HEK293 (cell line): ENCODE measurements at regions of chr18 and their contacts with region 1.

Region 1: GRCh38 chr18:58051765-58052460 is 7.9 kb downstream of the NEDD4L start:
- H3K4me3 ChIP-seq: no peak overlapping the region
- H3K27ac ChIP-seq: no peak overlapping the region
- H3K4me1 ChIP-seq: peaks cover 2% of the 10 kb centered on the region; the same call in 1 of the 2 replicates
- CTCF ChIP-seq: peak; percentile 28; the same call in 1 of the 2 replicates

Region 2: DNA sequence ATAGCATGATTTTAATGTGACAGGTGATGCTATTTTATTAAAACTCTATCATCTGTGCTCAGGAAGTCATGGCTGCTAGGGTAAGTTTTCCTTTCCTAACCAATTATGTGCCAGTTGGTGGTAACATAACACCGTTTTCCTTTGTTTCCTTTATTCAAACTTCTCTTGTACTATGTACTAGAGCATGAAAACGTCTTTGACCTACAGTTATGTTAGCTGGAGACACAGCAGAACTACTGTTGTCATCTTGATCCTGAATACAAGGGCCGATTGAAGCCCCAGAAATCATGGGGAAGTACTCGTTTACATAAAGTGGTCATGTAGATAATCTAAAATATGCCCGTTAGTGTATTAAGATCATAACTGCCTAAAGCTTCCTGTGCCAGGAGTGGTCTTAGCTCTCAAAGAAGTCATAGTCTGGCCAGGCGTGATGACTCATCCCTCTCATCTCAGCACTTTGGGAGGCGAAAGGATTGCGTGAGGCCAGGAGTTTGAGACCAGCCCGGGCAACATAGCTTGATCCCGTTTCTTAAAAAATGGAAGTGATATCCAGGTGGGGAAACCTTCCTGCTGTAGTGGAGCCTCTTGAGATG is 12.6 kb after region 1 on chr18:
- CTCF ChIA-PET with region 1: interaction called, 14 read pairs
- POLR2A ChIA-PET with region 1: interaction called, 3 read pairs
- H3K4me3 ChIP-seq: no peak overlapping the region
- H3K27ac ChIP-seq: no peak overlapping the region
- H3K4me1 ChIP-seq: no peaks in the 10 kb centered on the region
- CTCF ChIP-seq: no peak

Region 3: DNA sequence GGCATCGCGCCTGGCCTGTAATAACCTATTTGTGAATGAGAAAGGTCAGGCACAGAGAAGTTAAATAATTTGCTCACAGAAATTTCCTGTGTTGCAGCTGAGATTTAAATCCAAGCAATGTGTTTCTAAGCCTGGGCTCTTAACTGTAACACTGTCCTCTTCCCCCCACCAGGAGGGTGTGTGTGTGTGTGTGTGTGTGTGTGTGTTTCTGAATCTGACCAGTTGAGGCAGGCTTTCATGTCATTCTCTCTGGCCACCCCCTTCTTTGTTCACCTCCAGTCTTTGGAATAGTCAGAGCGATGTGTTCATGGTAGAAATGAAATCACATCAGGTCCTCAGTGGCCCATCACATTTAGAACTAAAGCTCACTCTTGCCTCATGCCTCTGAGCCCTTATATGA is 73.3 kb after region 1 on chr18:
- CTCF ChIA-PET with region 1: interaction called, 58 read pairs
- POLR2A ChIA-PET with region 1: interaction called, 3 read pairs
- H3K4me3 ChIP-seq: no peak overlapping the region
- H3K27ac ChIP-seq: no peak overlapping the region
- H3K4me1 ChIP-seq: no peaks in the 10 kb centered on the region
- CTCF ChIP-seq: peak; percentile 72

Region 4: GRCh38 chr18:58699551-58699950 is 647.6 kb after region 1 on chr18:
- CTCF ChIA-PET with region 1: no interaction called
- POLR2A ChIA-PET with region 1: no interaction called
- H3K4me3 ChIP-seq: no peak overlapping the region
- H3K27ac ChIP-seq: no peak overlapping the region
- H3K4me1 ChIP-seq: peaks cover 9% of the 10 kb centered on the region
- CTCF ChIP-seq: no peak